ENCODE measurements at regions of chr2 and their contacts with region 1.

Region 1: DNA sequence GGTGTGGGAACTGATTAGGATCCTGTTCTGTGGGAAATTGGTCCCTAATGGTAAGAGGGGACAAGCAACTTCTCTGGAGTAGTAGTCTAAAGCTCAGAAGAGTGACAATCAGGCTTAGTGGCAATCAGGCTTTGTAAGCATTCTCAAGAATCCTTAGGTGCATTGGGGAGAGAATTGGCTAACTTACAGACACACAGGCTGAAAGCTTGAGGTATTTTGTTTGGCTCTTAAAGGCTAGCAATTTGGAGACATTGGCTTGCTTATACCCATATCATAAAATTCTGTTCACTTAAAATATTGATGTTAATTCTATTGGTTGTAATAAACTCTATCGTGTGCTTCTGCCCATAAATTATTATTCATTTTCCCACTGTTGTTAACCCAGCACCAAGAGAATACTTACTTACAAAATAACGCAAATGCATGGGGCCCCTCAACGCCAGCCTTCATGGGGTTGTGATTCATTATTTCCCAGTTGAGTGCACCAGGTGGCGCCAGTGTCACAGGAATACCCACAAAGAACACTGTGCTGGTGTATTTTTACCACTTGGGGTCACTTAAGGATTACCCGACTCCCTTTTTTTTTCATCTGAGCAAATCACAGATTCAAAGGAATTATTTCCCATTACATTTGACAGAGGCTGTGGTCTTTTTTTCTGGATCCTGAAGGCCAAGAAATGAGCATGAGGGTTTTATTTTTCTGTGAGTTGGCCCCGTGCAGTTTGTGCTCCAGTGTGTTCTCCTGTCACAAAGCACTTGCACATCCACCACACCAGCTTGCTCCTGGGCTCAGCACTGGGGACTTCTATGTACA is 45.5 kb downstream of the DDX1 start:
- DNase-seq: peak; percentile 71 to 90 (median 76)
- H3K4me3 ChIP-seq: no peak overlapping the region
- H3K27ac ChIP-seq: peak overlapping the region in 29 of 59 donors; percentile 1 to 67 (median 40)
- H3K27me3 ChIP-seq: no peaks in the 10 kb centered on the region
- CTCF ChIP-seq: peak; percentile 73 to 99 (median 97)

Region 2: GRCh38 chr2:15042801-15043217 is 594.4 kb before region 1 on chr2:
- intact Hi-C with region 1: no loop called
- DNase-seq: no peak
- H3K4me3 ChIP-seq: no peak overlapping the region
- H3K27ac ChIP-seq: no peak overlapping the region
- H3K27me3 ChIP-seq: no peaks in the 10 kb centered on the region
- CTCF ChIP-seq: no peak

Region 3: DNA sequence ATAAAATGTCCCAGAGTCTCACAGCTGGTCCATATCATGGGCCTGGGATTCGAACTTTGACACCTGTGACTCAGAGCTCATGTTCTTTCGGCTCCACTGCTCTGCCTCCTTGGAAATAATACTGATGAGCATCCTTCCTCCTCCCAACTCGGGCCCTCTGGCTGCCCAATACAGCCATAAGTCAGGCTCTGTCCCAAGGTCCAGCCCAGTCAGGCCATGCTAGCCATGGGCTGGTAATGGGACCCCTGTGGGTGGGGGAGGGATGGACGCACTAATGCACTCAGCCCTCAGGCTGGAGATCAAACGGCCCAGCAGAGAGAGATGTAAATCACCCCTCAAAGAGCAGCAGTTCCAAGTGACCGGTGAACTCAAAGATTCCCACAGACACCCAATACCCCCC is 15.6 kb after region 1 on chr2:
- intact Hi-C with region 1: no loop called
- DNase-seq: no peak
- H3K4me3 ChIP-seq: no peak overlapping the region
- H3K27ac ChIP-seq: no peak overlapping the region
- H3K27me3 ChIP-seq: no peaks in the 10 kb centered on the region
- CTCF ChIP-seq: no peak

Region 4: DNA sequence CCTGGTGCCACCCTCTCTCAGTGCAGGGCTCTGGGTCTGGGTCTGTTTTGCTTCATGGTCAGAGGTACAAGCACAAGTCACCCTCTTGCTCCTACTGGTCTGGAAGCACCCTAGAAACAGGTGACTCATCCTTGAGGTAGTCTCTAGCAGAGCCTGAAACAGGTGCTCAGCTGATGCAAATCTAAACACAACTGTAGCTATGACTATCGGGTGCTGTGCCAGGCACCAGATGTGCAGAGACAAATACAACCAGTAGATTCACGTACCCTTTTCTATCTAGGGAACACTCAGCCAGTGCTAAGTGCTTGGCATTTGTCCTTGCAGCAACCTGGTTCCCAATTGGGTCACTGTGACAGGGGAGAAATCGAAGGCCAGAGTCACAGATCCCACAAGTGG is 162.3 kb after region 1 on chr2:
- intact Hi-C with region 1: loop called (anchors 5 to 10 kb)
- DNase-seq: no peak
- H3K4me3 ChIP-seq: no peak overlapping the region
- H3K27ac ChIP-seq: peak overlapping the region in 27 of 59 donors; percentile 9 to 91 (median 80)
- H3K27me3 ChIP-seq: peaks cover 0 to 5% (median 0%) of the 10 kb centered on the region in 45 donors
- CTCF ChIP-seq: no peak

Region 5: DNA sequence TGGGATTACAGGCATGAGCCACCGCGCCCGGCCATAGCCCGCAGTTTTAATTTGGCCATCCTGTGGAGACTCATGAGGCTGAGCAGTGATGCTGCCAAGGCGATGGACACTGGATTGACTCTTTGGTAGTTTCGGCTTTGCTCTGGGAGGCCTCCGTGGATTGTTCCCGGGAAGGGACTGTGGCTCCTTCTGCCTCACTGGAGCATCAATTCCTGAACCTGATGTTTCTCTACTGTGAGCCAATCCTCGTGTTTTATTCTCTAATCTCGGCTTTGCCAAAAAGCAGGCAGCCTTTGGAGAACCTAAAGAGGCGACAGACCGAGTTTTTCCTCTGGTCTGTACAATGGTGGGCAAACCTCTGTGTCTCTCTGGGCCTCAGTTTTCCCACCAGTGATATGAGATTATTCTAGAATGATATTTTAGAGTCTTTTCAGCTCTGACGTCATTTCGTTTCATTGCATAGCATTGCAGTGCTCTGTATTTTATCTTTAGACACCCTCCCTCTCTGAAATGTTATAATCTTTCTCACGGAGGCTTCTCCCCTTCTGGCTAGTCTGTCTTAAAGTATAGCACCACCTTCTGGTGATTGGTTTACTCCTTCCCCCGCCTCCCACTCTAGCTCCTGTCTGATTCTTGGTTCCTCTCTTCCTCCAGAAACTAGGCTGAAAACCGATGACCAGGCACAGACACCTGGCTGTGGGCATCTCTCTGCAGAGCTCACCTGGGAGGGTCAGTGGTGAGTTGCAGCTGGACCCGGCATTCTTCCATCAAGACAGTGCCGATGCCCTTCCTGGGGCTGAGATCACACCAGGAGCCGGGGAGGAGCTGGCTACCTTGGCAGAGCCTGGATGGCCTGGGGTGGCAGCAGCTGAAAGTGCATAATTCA is 644.5 kb after region 1 on chr2:
- intact Hi-C with region 1: loop called (anchors 5 kb)
- DNase-seq: peak in 5 of 10 donors; percentile 6 to 57 (median 38)
- H3K4me3 ChIP-seq: no peak overlapping the region
- H3K27ac ChIP-seq: no peak overlapping the region
- H3K27me3 ChIP-seq: no peaks in the 10 kb centered on the region
- CTCF ChIP-seq: peak; percentile 26 to 84 (median 68)

Region 6: DNA sequence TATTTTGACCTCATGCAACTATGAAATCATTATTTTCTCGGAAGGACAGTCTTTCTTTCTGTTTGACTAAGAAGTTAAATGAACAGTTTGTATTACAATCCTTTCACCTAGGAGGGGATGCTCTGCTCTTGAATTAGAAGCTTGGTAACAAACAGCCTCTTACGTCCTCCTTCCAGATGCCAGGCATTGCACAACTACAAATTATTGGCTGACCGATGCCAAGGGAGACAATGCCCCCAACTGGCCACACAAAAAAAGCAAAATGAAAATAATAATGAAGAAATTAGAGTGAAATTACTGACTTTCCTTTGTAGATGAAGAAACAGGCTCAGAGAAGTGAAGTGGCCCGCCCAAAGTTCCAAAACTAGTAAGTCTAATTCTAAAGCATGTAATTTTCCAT is 850.5 kb after region 1 on chr2:
- intact Hi-C with region 1: loop called in 1 of 2 experiments (anchors 2 kb)
- DNase-seq: peak in 1 of 10 donors; percentile 12
- H3K4me3 ChIP-seq: no peak overlapping the region
- H3K27ac ChIP-seq: no peak overlapping the region
- H3K27me3 ChIP-seq: peaks cover 0 to 9% (median 0%) of the 10 kb centered on the region in 45 donors
- CTCF ChIP-seq: peak in 54 of 56 donors; percentile 19 to 67 (median 48)

Region 7: GRCh38 chr2:16608661-16609643 is 971.8 kb after region 1 on chr2:
- intact Hi-C with region 1: loop called (anchors 5 kb)
- DNase-seq: peak; percentile 81 to 93 (median 90)
- H3K4me3 ChIP-seq: peak overlapping the region; percentile 32 to 74 (median 54)
- H3K27ac ChIP-seq: peak overlapping the region; percentile 18 to 91 (median 83)
- H3K27me3 ChIP-seq: no peaks in the 10 kb centered on the region
- CTCF ChIP-seq: peak; percentile 81 to 99 (median 93)

Measured in dorsolateral prefrontal cortex (tissue), 120 donors.